ENCODE measurements at regions of chr5 and their contacts with region 1.

Region 1: GRCh38 chr5:79535477-79536192 is 21.7 kb upstream of the HOMER1 start:
- DNase-seq: peak in 2 of 9 experiments; percentile 15 to 24
- ATAC-seq: no peak
- H3K4me3 ChIP-seq: no peak overlapping the region
- H3K4me3 Mint-ChIP-seq: no peak overlapping the region
- H3K27ac ChIP-seq: no peak overlapping the region
- H3K27ac Mint-ChIP-seq: no peak overlapping the region
- H3K4me1 ChIP-seq: no peaks in the 10 kb centered on the region
- H3K4me1 Mint-ChIP-seq: no peaks in the 10 kb centered on the region
- H3K27me3 ChIP-seq: no peaks in the 10 kb centered on the region
- H3K27me3 Mint-ChIP-seq: peaks cover 8% of the 10 kb centered on the region
- CTCF ChIP-seq: peak; percentile 28

Region 2: GRCh38 chr5:79329453-79329852 is 206.2 kb before region 1 on chr5:
- CTCF ChIA-PET with region 1: no interaction called
- POLR2A ChIA-PET with region 1: no interaction called
- intact Hi-C with region 1: loop called in 1 of 2 experiments (anchors 10 kb)
- DNase-seq: no peak
- ATAC-seq: no peak
- H3K4me3 ChIP-seq: no peak overlapping the region
- H3K4me3 Mint-ChIP-seq: no peak overlapping the region
- H3K27ac ChIP-seq: no peak overlapping the region
- H3K27ac Mint-ChIP-seq: no peak overlapping the region
- H3K4me1 ChIP-seq: no peaks in the 10 kb centered on the region
- H3K4me1 Mint-ChIP-seq: no peaks in the 10 kb centered on the region
- H3K27me3 ChIP-seq: no peaks in the 10 kb centered on the region
- H3K27me3 Mint-ChIP-seq: no peaks in the 10 kb centered on the region
- CTCF ChIP-seq: no peak

Measured in CD8-positive, alpha-beta T cell (primary cell).